ENCODE measurements at regions of chr3 and their contacts with region 1.

Region 1: DNA sequence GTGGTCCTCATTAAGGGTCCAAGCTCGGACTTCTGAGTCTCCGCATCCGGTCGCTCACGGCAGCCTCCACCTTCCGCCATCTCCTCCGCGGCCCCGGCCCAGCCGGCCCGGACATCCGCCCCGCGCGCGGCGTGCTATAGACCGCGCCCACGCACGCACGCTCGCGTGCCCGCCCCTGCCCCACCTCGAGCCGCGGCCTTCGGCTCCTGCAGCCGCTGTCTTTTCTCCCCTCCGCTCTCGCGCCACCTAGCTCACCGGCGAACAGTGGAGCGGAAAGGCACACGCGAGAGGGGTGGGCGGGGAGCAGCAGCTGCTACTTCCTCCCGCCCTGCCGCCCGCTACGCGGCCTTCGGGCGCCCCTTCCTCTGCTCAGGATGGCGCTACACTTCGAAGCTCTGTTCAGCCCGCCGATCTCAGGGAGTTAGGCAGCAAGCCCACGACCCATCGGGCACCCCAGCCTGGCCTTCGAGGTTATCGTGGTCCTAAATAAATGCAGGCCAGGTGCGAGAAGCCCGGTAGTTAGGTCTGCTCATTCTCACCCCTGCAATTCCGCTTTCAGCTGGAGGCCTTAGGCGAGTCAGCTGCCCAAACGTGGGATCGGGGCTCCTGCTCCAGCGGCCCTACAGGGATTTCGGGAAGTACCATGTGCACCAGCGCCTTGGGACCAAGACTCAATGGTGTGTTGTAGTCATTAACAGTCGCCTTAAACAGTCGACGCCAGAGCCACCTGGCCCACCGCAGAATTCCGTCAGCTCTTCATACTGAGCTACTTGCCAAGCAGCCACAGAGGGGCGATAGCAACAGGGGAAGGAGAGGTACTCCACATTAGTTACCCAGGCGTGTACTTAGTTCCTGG is at the start of gene USP4:
- DNase-seq: peak; percentile 88
- ATAC-seq: peak; percentile 84
- H3K4me3 Mint-ChIP-seq: peak within 1 kb of the TSS; percentile 95
- H3K27ac Mint-ChIP-seq: peak within 1 kb of the TSS; percentile 99
- H3K4me1 Mint-ChIP-seq: peaks cover 64% of the 10 kb centered on the region
- H3K27me3 Mint-ChIP-seq: no peaks in the 10 kb centered on the region
- CTCF ChIP-seq: no peak
- total RNA-seq, gene USP4: 86.7 and 115 TPM in 2 replicates

Region 2: DNA sequence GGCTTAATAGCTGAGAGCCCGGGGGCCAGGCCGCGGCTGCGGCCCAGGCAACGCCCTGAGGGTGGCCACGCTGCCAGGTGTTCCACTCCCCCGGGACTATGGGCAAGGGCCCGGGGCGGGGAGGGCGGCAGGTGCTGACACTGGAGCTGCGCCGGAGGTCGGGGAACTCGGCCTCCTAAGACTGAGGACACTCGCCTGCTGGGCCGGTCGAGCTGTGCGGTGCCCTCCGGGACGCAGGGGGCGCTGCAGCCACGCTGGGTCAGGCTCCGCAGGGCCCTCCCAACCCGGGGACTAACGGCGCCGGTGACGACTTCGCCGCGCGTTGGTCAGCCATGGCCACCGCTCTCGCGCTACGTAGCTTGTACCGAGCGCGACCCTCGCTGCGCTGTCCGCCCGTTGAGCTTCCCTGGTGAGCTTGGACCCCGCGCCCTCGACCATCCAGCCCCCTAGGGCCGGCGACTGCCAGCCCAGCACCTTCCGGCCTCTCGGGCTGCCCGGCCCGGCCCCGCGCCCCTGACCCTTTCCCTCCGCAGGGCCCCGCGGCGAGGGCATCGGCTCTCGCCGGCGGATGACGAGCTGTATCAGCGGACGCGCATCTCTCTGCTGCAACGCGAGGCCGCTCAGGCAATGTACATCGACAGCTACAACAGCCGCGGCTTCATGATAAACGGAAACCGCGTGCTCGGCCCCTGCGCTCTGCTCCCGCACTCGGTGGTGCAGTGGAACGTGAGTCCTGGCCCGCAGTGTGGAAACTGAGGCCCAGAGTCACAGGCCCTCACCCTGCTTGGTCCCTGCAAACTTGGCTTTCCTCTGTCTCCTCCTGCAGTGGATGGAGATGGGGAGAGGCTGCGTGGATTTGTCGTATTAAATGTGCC is 318.1 kb before region 1 on chr3 and contains the start of gene NDUFAF3:
- CTCF ChIA-PET with region 1: no interaction called
- POLR2A ChIA-PET with region 1: interaction called, 10 read pairs
- intact Hi-C with region 1: no loop called
- DNase-seq: peak; percentile 94
- ATAC-seq: peak; percentile 67
- H3K4me3 Mint-ChIP-seq: peak within 1 kb of the TSS; percentile 94
- H3K27ac Mint-ChIP-seq: peak within 1 kb of the TSS; percentile 97
- H3K4me1 Mint-ChIP-seq: peaks cover 66% of the 10 kb centered on the region
- H3K27me3 Mint-ChIP-seq: no peaks in the 10 kb centered on the region
- CTCF ChIP-seq: peak; percentile 39
- total RNA-seq, gene NDUFAF3: 86.3 and 86.5 TPM in 2 replicates

Region 3: GRCh38 chr3:49300595-49300994 is 39.6 kb before region 1 on chr3:
- CTCF ChIA-PET with region 1: no interaction called
- POLR2A ChIA-PET with region 1: no interaction called
- intact Hi-C with region 1: no loop called
- DNase-seq: no peak
- ATAC-seq: no peak
- H3K4me3 Mint-ChIP-seq: no peak overlapping the region
- H3K27ac Mint-ChIP-seq: no peak overlapping the region
- H3K4me1 Mint-ChIP-seq: no peaks in the 10 kb centered on the region
- H3K27me3 Mint-ChIP-seq: no peaks in the 10 kb centered on the region
- CTCF ChIP-seq: no peak

Region 4: DNA sequence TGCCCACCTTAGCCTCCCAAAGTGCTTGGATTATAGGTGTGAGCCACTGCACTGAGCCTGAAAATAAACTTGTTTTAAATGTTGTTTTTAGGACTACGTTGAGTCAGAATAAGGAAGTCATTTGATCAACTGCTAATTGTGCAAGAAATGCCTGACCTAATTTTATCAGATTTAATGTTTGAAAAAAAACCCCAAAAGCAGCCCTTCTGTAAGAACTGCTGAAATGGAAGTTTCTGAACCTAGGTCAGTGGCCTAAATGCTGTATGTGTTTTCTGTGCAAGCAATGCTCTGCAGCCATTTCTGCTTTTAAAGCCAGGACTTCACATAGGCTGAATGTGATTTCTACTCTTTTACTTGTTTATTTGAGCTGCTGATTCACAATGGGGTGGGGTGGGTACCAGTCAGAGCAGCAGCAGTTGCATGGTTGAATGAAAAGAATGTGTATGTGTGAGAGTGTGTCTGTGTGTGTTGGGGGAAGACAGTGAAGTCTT is 11.4 kb after region 1 on chr3:
- CTCF ChIA-PET with region 1: interaction called, 7 read pairs
- POLR2A ChIA-PET with region 1: interaction called, 106 read pairs
- intact Hi-C with region 1: no loop called
- DNase-seq: no peak
- ATAC-seq: peak; percentile 56
- H3K4me3 Mint-ChIP-seq: peak overlapping the region; percentile 28
- H3K27ac Mint-ChIP-seq: peak overlapping the region; percentile 79
- H3K4me1 Mint-ChIP-seq: peaks cover 47% of the 10 kb centered on the region
- H3K27me3 Mint-ChIP-seq: no peaks in the 10 kb centered on the region
- CTCF ChIP-seq: no peak

Region 5: GRCh38 chr3:49397470-49397869 is 57.3 kb after region 1 on chr3:
- CTCF ChIA-PET with region 1: interaction called, 3 read pairs
- POLR2A ChIA-PET with region 1: interaction called, 10 read pairs
- intact Hi-C with region 1: no loop called
- DNase-seq: no peak
- ATAC-seq: peak; percentile 84
- H3K4me3 Mint-ChIP-seq: no peak overlapping the region
- H3K27ac Mint-ChIP-seq: peak overlapping the region; percentile 19
- H3K4me1 Mint-ChIP-seq: peaks cover 78% of the 10 kb centered on the region
- H3K27me3 Mint-ChIP-seq: no peaks in the 10 kb centered on the region
- CTCF ChIP-seq: no peak

Region 6: GRCh38 chr3:49428697-49429100 is 88.5 kb after region 1 on chr3:
- CTCF ChIA-PET with region 1: interaction called, 8 read pairs
- POLR2A ChIA-PET with region 1: interaction called, 69 read pairs
- intact Hi-C with region 1: loop called (anchors 1 kb)
- DNase-seq: no peak
- ATAC-seq: peak; percentile 1
- H3K4me3 Mint-ChIP-seq: peak overlapping the region; percentile 92
- H3K27ac Mint-ChIP-seq: peak overlapping the region; percentile 96
- H3K4me1 Mint-ChIP-seq: peaks cover 17% of the 10 kb centered on the region
- H3K27me3 Mint-ChIP-seq: no peaks in the 10 kb centered on the region
- CTCF ChIP-seq: no peak

Region 7: DNA sequence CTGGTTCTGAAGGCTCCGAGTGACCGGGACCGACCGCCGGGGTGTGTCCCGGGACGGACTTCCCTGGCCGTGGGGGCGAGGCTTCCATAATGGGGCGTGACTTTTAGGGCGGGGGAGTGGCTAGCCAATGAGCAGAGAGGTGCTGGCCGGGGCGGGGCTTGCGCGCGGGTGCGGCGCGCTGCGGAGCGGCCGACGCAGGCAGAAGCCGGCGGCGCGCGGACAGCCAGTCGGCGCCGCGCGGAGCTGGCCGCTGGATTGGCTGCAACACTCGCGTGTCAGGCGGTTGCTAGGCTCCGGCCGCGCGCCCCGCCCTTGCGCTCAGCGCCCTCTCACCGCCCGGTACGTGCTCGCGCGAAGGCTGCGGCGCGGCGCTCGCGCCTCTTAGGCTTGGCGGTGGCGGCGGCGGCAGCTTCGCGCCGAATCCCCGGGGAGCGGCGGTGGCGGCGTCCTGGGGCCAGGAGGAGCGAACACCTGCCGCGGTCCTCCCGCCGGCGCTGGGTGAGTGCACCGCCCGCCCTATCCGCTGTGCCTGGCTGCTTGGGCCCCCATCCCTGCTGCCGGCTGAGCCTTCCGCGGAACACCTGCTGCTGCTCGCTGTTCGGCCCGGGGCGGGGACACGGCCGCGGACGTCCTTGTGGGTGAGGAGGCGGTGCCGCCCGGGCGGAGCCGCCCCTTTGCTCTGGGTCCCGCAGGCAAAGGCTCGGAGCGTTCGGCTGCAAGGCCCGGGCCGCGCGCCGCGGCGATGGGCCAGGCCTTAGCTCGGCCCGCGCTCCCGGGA is 130.0 kb after region 1 on chr3 and contains the start of gene DAG1:
- CTCF ChIA-PET with region 1: interaction called, 6 read pairs
- POLR2A ChIA-PET with region 1: interaction called, 34 read pairs
- intact Hi-C with region 1: loop called (anchors 1 kb)
- DNase-seq: peak; percentile 97
- ATAC-seq: peak; percentile 87
- H3K4me3 Mint-ChIP-seq: peak within 1 kb of the TSS; percentile 91
- H3K27ac Mint-ChIP-seq: peak within 1 kb of the TSS; percentile 96
- H3K4me1 Mint-ChIP-seq: peaks cover 26% of the 10 kb centered on the region
- H3K27me3 Mint-ChIP-seq: no peaks in the 10 kb centered on the region
- CTCF ChIP-seq: no peak
- total RNA-seq, gene DAG1: 18.5 and 19.7 TPM in 2 replicates

Region 8: GRCh38 chr3:50205414-50206276 is 865.5 kb after region 1 on chr3:
- CTCF ChIA-PET with region 1: no interaction called
- POLR2A ChIA-PET with region 1: no interaction called
- intact Hi-C with region 1: no loop called
- DNase-seq: peak; percentile 32
- ATAC-seq: peak; percentile 84
- H3K4me3 Mint-ChIP-seq: peak overlapping the region; percentile 35
- H3K27ac Mint-ChIP-seq: no peak overlapping the region
- H3K4me1 Mint-ChIP-seq: peaks cover 2% of the 10 kb centered on the region
- H3K27me3 Mint-ChIP-seq: peaks cover 50% of the 10 kb centered on the region
- CTCF ChIP-seq: no peak

Measured in activated B cell treated with CpG ODN at 0.5 μM for 24 hours (primary cell).